Activated CD8-positive, alpha-beta T cell treated with anti-CD3 and anti-CD28 coated beads for 36 hours (primary cell): ENCODE measurements at regions of chr1 and their contacts with region 1.

Region 1: GRCh38 chr1:84936116-84936810 is 43.3 kb upstream of the LPAR3 start:
- DNase-seq: peak; percentile 23
- ATAC-seq: peak; percentile 77
- H3K4me3 Mint-ChIP-seq: no peak overlapping the region
- H3K27ac Mint-ChIP-seq: no peak overlapping the region
- H3K4me1 Mint-ChIP-seq: peaks cover 3% of the 10 kb centered on the region
- H3K27me3 Mint-ChIP-seq: no peaks in the 10 kb centered on the region
- CTCF ChIP-seq: peak; percentile 96

Region 2: GRCh38 chr1:84668185-84668584 is 268.1 kb before region 1 on chr1:
- CTCF ChIA-PET with region 1: interaction called, 11 read pairs
- POLR2A ChIA-PET with region 1: no interaction called
- intact Hi-C with region 1: loop called (anchors 10 kb)
- DNase-seq: no peak
- ATAC-seq: peak; percentile 42
- H3K4me3 Mint-ChIP-seq: no peak overlapping the region
- H3K27ac Mint-ChIP-seq: no peak overlapping the region
- H3K4me1 Mint-ChIP-seq: peaks cover 6% of the 10 kb centered on the region
- H3K27me3 Mint-ChIP-seq: no peaks in the 10 kb centered on the region
- CTCF ChIP-seq: peak; percentile 15

Region 3: DNA sequence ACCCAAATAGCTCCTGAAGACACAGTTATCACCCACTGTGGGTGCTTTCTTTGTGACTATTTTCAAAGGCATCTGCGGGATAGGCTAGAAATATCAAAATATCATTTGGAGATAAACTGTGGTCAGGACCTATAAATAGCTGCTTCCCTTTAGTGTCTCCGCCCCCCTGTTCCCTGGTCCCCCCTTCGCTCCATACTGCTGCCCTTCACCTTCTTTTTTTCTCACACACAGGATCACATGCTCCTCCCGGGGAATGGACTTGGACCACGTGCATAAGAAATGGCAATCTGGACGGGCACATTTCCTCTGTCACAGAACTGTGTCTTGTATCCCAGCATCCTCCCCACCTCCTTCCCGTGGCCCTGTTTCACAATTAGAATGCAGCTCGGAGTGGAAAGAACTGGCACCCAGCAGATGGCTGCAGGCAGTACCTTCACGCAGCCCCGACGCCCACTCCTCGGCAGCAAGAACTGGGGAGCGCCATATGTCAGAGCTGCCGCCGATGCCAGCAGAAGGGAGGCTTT is 177.2 kb before region 1 on chr1:
- CTCF ChIA-PET with region 1: interaction called, 31 read pairs
- POLR2A ChIA-PET with region 1: no interaction called
- intact Hi-C with region 1: no loop called
- DNase-seq: peak; percentile 37
- ATAC-seq: peak; percentile 75
- H3K4me3 Mint-ChIP-seq: peak overlapping the region; percentile 23
- H3K27ac Mint-ChIP-seq: no peak overlapping the region
- H3K4me1 Mint-ChIP-seq: peaks cover 10% of the 10 kb centered on the region
- H3K27me3 Mint-ChIP-seq: peaks cover 8% of the 10 kb centered on the region
- CTCF ChIP-seq: no peak

Region 4: DNA sequence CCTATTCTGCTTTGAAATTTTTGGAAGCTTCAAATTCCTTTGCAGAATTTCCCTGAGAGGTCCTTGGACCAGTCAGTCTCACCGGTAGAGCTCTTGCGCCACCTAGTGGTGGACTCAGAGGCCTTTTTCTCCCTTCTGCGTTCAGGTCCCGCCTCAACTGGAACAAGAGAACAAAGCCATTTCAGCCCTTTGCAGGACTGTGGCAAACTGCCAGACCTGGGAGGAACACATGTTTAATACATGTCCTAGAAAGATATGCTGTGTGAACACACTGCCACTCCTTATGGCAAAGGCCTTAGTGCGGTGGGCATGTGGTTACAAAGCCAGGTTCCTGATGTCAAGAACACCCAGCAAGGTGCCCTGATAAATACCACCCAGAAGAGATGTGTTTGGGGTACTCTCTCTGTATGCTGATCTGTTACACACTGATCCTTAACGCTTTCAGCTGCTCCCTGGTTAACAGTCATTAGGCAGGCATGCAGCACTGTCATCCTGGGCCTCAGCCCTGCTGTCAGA is 163.8 kb before region 1 on chr1:
- CTCF ChIA-PET with region 1: interaction called, 31 read pairs
- POLR2A ChIA-PET with region 1: no interaction called
- intact Hi-C with region 1: no loop called
- DNase-seq: peak; percentile 81
- ATAC-seq: peak; percentile 71
- H3K4me3 Mint-ChIP-seq: no peak overlapping the region
- H3K27ac Mint-ChIP-seq: no peak overlapping the region
- H3K4me1 Mint-ChIP-seq: no peaks in the 10 kb centered on the region
- H3K27me3 Mint-ChIP-seq: peaks cover 2% of the 10 kb centered on the region
- CTCF ChIP-seq: peak; percentile 95

Region 5: GRCh38 chr1:84920159-84920558 is 16.1 kb before region 1 on chr1:
- CTCF ChIA-PET with region 1: interaction called, 20 read pairs
- POLR2A ChIA-PET with region 1: no interaction called
- intact Hi-C with region 1: no loop called
- DNase-seq: no peak
- ATAC-seq: no peak
- H3K4me3 Mint-ChIP-seq: no peak overlapping the region
- H3K27ac Mint-ChIP-seq: no peak overlapping the region
- H3K4me1 Mint-ChIP-seq: no peaks in the 10 kb centered on the region
- H3K27me3 Mint-ChIP-seq: peaks cover 3% of the 10 kb centered on the region
- CTCF ChIP-seq: no peak

Region 6: DNA sequence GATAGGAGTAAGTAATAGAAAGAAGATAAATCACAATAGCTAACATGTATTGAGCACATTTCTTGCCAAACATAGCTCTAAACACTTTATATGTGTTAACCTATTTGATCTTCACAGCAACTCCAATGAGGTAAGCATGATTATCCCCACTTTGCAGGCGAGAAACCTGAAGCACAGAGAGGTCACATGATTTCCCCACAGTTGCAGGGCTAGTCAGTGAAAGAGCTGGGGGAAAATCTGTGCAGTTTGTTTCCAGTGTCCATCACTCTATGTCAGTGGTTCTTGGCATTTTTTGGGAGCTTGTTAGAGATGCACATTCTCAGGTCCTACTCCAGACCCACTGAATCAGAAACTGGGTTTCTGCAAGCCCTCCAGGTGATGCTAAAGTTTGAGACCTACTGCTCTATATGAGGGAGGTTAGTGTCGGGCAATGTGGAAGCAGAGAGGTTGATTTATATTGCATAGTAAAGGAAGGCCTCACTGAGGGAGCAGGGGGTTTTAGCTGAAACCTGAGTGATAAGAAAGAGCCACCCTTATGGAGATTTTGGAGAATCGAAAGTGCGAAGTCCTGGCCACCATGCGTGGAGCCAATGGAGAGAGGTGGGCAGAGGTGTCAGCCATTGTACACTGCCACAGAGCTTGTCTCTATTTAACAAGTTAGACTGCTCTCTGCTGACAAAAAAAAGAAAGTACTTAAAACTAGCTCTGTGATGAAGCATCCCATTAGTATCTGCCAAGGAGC is 91.2 kb after region 1 on chr1:
- CTCF ChIA-PET with region 1: interaction called, 15 read pairs
- POLR2A ChIA-PET with region 1: no interaction called
- intact Hi-C with region 1: no loop called
- DNase-seq: peak; percentile 42
- ATAC-seq: peak; percentile 89
- H3K4me3 Mint-ChIP-seq: no peak overlapping the region
- H3K27ac Mint-ChIP-seq: peak overlapping the region; percentile 80
- H3K4me1 Mint-ChIP-seq: peaks cover 13% of the 10 kb centered on the region
- H3K27me3 Mint-ChIP-seq: peaks cover 1% of the 10 kb centered on the region
- CTCF ChIP-seq: peak; percentile 26